GM12878 (cell line): ENCODE measurements at regions of chr6 and their contacts with region 1.

Region 1: DNA sequence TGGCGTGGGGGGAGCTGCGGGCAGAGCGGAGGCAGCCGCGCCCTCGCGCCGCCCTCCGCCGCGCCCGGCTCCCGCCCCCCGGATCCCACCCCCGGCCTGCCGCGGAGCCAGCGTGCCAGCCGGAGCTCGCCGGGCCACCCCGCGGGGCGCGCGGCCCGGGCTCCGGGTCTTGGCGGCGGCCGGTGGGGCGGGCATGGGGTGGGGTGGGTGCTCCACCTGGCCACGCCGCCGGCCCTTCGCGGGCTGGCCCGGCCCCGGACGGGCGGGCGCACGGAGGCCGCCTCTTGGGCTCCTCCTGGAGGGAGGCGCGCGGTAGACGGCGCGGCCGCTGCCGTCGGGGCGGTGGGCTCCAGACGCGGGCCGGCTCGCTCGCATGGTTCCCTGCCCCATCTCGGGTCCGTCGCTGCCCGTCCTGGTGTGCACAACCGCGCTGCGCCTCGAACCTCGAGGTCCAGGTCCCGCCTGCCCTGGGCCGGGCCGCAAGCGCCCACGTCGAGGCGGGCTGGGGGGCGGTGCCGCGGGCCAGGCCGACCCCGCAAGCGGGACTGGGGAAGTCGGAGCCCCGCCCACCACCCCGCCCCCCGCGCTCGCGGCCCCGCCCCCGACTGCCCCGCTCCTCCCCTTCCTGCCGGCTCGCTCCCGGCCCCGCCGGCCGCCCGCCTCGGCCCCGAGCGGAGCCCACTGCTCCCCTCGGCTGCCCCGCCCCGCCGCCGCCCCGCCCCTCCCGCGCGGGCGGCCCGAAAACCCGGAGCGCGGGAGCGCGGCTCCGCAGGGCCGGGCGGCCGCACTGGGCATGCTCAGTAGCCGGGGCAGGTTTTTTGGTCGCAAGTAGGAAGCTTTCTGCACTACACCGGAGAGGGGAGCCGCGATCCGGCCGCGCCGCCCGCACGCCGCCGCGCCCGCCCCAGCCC is at the start of gene CDYL:
- DNase-seq: no peak
- ATAC-seq: peak; percentile 64
- H3K4me3 ChIP-seq: peak within 1 kb of the TSS; percentile 89
- H3K27ac ChIP-seq: peak within 1 kb of the TSS; percentile 60
- H3K4me1 ChIP-seq: peaks cover 25% of the 10 kb centered on the region
- H3K27me3 ChIP-seq: peaks cover 3% of the 10 kb centered on the region in 2 experiments; a peak in 2 of 4 replicates
- CTCF ChIP-seq: 0 out of 6 replicates have a peak, but pooled peaks of 1 of the 3 experiments have one; percentile 2
- EP300 ChIP-seq: no peak
- POLR2A ChIP-seq: no peak
- RAD21 ChIP-seq: no peak
- polyA plus RNA-seq, gene CDYL: 11.2 to 15.3 TPM

Region 2: GRCh38 chr6:4788953-4789584 is 13.2 kb after region 1 on chr6:
- CTCF ChIA-PET with region 1: interaction called, 27 read pairs
- POLR2A ChIA-PET with region 1: interaction called, 23 read pairs
- RAD21 ChIA-PET with region 1: interaction called, 15 read pairs
- SMC1A ChIA-PET with region 1: interaction called, 32 read pairs
- in situ Hi-C with region 1: no loop called
- intact Hi-C with region 1: no loop called
- DNase-seq: no peak
- ATAC-seq: peak; percentile 97
- H3K4me3 ChIP-seq: peak overlapping the region; percentile 53; the same call in 1 of the 2 replicates
- H3K27ac ChIP-seq: peak overlapping the region; percentile 42
- H3K4me1 ChIP-seq: peaks cover 27% of the 10 kb centered on the region
- H3K27me3 ChIP-seq: no peaks in the 10 kb centered on the region
- CTCF ChIP-seq: peak; percentile 39 to 69 (median 43)
- EP300 ChIP-seq: no peak
- POLR2A ChIP-seq: no peak
- RAD21 ChIP-seq: peak; percentile 21; the same call in 1 of the 2 replicates

Region 3: GRCh38 chr6:4848382-4849068 is 72.7 kb after region 1 on chr6:
- CTCF ChIA-PET with region 1: interaction called, 5 read pairs
- POLR2A ChIA-PET with region 1: interaction called, 3 read pairs
- RAD21 ChIA-PET with region 1: interaction called, 6 read pairs
- SMC1A ChIA-PET with region 1: interaction called, 25 read pairs
- in situ Hi-C with region 1: no loop called
- intact Hi-C with region 1: loop called (anchors 2 kb)
- DNase-seq: no peak
- ATAC-seq: peak; percentile 87
- H3K4me3 ChIP-seq: no peak overlapping the region
- H3K27ac ChIP-seq: no peak overlapping the region
- H3K4me1 ChIP-seq: no peaks in the 10 kb centered on the region
- H3K27me3 ChIP-seq: no peaks in the 10 kb centered on the region
- CTCF ChIP-seq: peak; percentile 38 to 60 (median 47); a peak in 5 of 6 replicates
- EP300 ChIP-seq: no peak
- POLR2A ChIP-seq: no peak
- RAD21 ChIP-seq: peak; percentile 65

Region 4: DNA sequence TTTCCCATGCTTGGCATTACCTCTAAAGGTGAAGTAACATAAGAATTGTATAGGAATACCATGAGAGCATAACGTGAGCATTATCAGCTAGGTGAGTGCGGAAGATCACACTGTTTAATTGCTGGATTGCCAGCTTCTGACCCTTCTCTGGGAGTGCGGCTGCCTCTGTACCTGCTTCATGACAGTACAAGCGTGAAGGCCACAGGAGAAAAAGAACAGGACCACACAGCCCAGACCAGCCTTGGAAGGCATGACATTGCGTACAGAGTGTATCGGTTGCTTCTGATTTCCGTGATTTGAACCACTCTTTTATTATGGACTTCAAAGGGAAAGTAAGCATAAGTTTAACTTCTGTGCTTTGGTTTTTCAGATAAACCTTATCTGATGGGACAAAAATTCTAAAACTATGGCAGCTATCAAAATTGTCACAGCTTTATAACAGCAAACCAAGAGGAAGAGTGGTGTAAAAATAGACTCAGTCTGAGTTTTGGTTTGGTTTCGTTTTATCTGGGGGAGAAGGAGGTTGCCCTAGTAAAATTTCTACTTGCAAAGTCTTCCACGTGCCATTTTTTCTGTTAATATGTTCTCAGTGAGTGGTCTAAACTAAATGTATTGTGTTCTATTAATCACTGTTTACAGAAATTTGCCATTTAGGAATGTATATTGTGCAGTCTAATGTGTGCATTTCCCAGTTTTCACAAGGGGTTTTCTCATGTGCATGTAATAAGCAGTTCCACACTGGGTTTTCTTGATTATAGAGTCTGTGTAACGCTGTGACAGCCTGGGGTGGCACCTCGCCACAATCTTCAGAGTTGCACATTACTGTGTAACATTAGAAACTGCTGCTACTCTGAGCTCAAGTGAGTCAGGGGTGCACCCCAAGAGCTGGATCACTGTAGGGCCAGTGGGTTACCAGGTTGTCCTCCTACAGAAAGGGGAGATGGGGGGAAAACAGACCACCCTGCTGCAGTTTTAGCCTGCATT is 130.7 kb after region 1 on chr6:
- CTCF ChIA-PET with region 1: interaction called, 4 read pairs
- POLR2A ChIA-PET with region 1: interaction called, 3 read pairs
- RAD21 ChIA-PET with region 1: interaction called, 14 read pairs
- SMC1A ChIA-PET with region 1: interaction called, 10 read pairs
- in situ Hi-C with region 1: no loop called
- intact Hi-C with region 1: loop called (anchors 2 kb)
- DNase-seq: no peak
- ATAC-seq: peak; percentile 79
- H3K4me3 ChIP-seq: peak overlapping the region; percentile 32; the same call in 1 of the 2 replicates
- H3K27ac ChIP-seq: peak overlapping the region; percentile 82
- H3K4me1 ChIP-seq: peaks cover 51% of the 10 kb centered on the region
- H3K27me3 ChIP-seq: no peaks in the 10 kb centered on the region
- CTCF ChIP-seq: no peak
- EP300 ChIP-seq: no peak
- POLR2A ChIP-seq: 0 out of 2 replicates have a peak, but pooled peaks have one; percentile 21
- RAD21 ChIP-seq: no peak

Region 5: GRCh38 chr6:5003604-5004372 is 227.9 kb after region 1 on chr6 and contains the start of gene RPP40:
- CTCF ChIA-PET with region 1: no interaction called
- POLR2A ChIA-PET with region 1: no interaction called
- RAD21 ChIA-PET with region 1: interaction called, 3 read pairs
- SMC1A ChIA-PET with region 1: no interaction called
- in situ Hi-C with region 1: no loop called
- intact Hi-C with region 1: loop called (anchors 2 kb)
- DNase-seq: peak; percentile 83
- ATAC-seq: peak; percentile 96
- H3K4me3 ChIP-seq: peak within 1 kb of the TSS; percentile 81
- H3K27ac ChIP-seq: peak within 1 kb of the TSS; percentile 43
- H3K4me1 ChIP-seq: no peaks in the 10 kb centered on the region; the same call in 1 of the 2 replicates
- H3K27me3 ChIP-seq: no peaks in the 10 kb centered on the region
- CTCF ChIP-seq: peak; percentile 80 to 86 (median 83)
- EP300 ChIP-seq: no peak
- POLR2A ChIP-seq: peak; percentile 64
- RAD21 ChIP-seq: peak; percentile 55
- polyA plus RNA-seq, gene RPP40: 24.4 to 46.3 TPM